ENCODE measurements at regions of chr10 and their contacts with region 1.

Region 1: GRCh38 chr10:68231106-68231816 is 652 bp downstream of the ATOH7 start:
- DNase-seq: peak; percentile 76
- ATAC-seq: peak; percentile 92
- H3K4me3 Mint-ChIP-seq: peak overlapping the region; percentile 77
- H3K27ac Mint-ChIP-seq: no peak overlapping the region; the same call in 1 of the 2 replicates
- H3K4me1 Mint-ChIP-seq: peaks cover 11% of the 10 kb centered on the region
- H3K27me3 Mint-ChIP-seq: peaks cover 66% of the 10 kb centered on the region
- CTCF ChIP-seq: no peak

Region 2: GRCh38 chr10:68331455-68332258 is 100.4 kb after region 1 on chr10 and contains the start of gene HNRNPH3:
- CTCF ChIA-PET with region 1: no interaction called
- POLR2A ChIA-PET with region 1: interaction called, 42 read pairs
- DNase-seq: peak; percentile 99
- ATAC-seq: peak; percentile 89
- H3K4me3 Mint-ChIP-seq: peak within 1 kb of the TSS; percentile 99
- H3K27ac Mint-ChIP-seq: peak within 1 kb of the TSS; percentile 99
- H3K4me1 Mint-ChIP-seq: peaks cover 43% of the 10 kb centered on the region
- H3K27me3 Mint-ChIP-seq: no peaks in the 10 kb centered on the region; the same call in 1 of the 2 replicates
- CTCF ChIP-seq: no peak
- total RNA-seq, gene HNRNPH3: 220 to 226 TPM (median 223 TPM) in 3 replicates